AG04449 (cell line): ENCODE measurements at regions of chr3 and their contacts with region 1.

Region 1: GRCh38 chr3:69161587-69162307 is 39.4 kb upstream of the LMOD3 start:
- DNase-seq: no peak
- H3K4me3 ChIP-seq: no peak overlapping the region
- CTCF ChIP-seq: peak; percentile 71

Region 2: DNA sequence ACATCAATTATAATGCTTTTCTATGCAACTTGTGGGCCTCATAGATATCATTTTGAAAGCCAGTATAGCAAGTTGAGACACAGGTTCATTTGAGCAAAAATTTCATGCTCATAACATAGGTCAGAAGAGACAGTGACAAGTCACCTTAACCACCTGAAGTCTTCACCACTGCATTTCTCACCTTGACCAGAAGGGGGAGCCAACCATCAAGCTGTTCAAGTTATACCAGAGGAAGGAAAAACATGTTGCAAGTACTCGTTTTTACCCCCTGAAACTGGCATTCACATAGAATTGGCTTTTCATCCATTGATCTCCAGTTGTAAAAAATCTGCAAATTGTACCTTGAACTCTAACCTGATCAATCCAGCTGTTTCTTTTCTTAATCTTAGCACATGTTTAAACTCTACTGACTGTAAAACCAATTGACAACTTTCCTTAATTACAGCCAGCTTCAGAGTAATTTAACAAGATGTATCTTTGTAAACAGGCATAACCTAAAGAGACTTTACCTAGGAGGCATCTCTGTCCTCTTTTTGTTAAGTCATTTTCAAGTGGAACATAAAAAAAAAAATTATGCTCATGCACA is 40.8 kb before region 1 on chr3:
- CTCF ChIA-PET with region 1: interaction called, 28 read pairs
- POLR2A ChIA-PET with region 1: no interaction called
- DNase-seq: peak; percentile 31
- H3K4me3 ChIP-seq: no peak overlapping the region
- CTCF ChIP-seq: peak; percentile 85

Region 3: GRCh38 chr3:69174871-69175737 is 13.4 kb after region 1 on chr3:
- CTCF ChIA-PET with region 1: interaction called, 62 read pairs
- POLR2A ChIA-PET with region 1: no interaction called
- DNase-seq: no peak
- H3K4me3 ChIP-seq: no peak overlapping the region
- CTCF ChIP-seq: no peak

Region 4: DNA sequence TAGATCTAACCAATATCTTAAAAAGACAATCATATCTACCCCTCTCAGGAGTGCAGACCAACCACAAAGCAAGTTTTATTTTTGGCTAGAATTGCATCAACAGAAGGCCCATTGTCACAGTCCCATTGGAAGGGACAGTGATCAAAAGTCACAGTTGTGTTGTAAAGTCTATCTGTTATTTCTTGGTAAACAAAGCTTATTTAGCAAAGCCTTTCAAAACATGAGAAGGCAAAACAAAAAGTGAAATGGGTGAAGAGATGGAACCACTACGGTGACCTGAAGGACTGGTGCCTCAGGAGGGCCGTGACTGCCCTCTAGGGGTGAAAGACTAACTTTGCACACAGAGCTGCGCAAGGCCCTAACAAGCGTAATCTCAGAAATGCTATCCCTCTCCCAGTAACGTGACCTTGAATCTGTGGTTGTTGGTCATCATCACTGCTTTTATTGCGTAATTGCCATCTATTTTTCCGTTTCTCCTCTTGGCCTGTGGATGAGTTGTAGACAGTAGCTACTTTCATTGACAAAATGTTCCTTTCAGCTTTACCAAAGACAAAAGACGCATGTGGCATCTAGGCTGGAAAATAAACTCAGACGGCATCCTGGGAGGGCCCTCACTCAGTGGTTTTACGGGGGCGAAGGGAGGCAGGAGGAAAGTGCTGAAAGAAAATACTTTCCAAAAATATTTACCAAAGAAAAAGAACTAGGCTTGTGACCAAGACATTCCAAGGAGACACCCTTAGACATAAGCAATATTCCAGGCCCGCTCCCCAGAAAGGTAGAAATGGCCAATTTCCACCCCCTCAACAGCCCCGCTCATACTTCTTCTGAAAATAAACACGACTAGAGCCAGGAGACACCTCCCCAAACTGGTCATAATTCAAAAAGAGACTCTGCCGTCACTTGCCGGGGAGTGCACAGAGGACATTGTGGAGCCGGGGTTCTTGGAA is 144.8 kb after region 1 on chr3:
- CTCF ChIA-PET with region 1: interaction called, 365 read pairs
- POLR2A ChIA-PET with region 1: no interaction called
- DNase-seq: peak; percentile 51
- H3K4me3 ChIP-seq: no peak overlapping the region
- CTCF ChIP-seq: peak; percentile 87

Region 5: DNA sequence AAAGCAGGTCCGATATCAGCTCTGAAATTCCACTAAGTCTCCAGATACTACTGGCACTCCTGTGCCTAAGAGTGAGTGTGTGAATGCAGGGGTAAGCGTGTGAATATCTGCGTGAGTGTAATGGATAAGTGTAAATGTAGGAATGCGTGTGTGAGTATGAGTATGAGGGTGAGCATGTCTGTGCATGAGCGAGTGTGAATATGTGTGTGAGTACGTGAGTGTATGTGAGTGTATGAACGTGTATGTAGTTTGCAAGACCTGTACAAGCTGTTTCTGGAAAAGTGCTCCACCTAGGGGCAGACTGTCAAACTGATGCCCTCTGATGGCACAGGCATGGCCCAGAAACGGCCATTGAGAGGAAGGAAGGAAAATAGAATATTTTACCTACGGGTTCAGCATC is 248.5 kb after region 1 on chr3:
- CTCF ChIA-PET with region 1: interaction called, 43 read pairs
- POLR2A ChIA-PET with region 1: no interaction called
- DNase-seq: no peak
- H3K4me3 ChIP-seq: no peak overlapping the region
- CTCF ChIP-seq: peak; percentile 80

Region 6: GRCh38 chr3:69439643-69440270 is 278.0 kb after region 1 on chr3:
- CTCF ChIA-PET with region 1: interaction called, 74 read pairs
- POLR2A ChIA-PET with region 1: no interaction called
- DNase-seq: no peak
- H3K4me3 ChIP-seq: no peak overlapping the region
- CTCF ChIP-seq: peak; percentile 38